B cell (primary cell): ENCODE measurements at regions of chr5 and their contacts with region 1.

Region 1: DNA sequence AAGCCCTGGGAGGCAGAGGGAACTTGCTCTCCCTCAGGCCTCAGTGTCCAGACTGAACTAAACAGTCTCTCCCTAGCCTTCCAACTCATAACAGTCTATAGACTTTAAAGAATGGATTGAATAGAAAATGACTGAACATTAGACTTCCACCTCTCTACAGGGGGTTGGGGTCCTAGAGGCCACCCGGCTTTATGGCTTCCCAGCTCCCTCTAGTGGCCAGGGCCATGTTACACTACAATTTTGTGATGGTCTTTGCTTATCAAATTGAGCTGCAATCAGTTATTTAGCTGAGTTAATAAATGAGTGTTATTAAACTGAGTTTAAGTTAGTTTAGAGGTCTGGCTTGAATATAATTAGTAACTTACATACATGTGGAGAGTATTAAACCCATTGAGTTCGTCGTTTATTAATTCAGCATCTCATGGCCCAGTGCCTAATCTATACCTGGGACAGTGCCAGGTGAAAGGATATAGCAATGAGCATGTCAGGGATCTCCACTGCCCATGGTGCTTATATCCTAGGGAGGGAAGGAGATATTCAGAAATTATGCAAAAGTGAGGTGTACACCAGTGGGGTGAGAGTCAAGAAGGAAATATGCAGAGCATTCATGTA is 105.2 kb downstream of the SH3TC2 start:
- DNase-seq: peak; percentile 68
- ATAC-seq: peak; percentile 69
- H3K4me3 ChIP-seq: no peak overlapping the region
- H3K4me3 Mint-ChIP-seq: no peak overlapping the region
- H3K27ac ChIP-seq: no peak overlapping the region
- H3K27ac Mint-ChIP-seq: no peak overlapping the region
- H3K4me1 ChIP-seq: peaks cover 4 to 5% of the 10 kb centered on the region in 2 donors
- H3K4me1 Mint-ChIP-seq: peaks cover 3% of the 10 kb centered on the region
- H3K27me3 ChIP-seq: no peaks in the 10 kb centered on the region
- H3K27me3 Mint-ChIP-seq: no peaks in the 10 kb centered on the region
- CTCF ChIP-seq: peak; percentile 97

Region 2: GRCh38 chr5:148374692-148375360 is 582.9 kb before region 1 on chr5:
- CTCF ChIA-PET with region 1: no interaction called
- POLR2A ChIA-PET with region 1: no interaction called
- intact Hi-C with region 1: no loop called
- DNase-seq: no peak
- ATAC-seq: peak; percentile 28
- H3K4me3 ChIP-seq: no peak overlapping the region
- H3K4me3 Mint-ChIP-seq: no peak overlapping the region
- H3K27ac ChIP-seq: no peak overlapping the region
- H3K27ac Mint-ChIP-seq: no peak overlapping the region
- H3K4me1 ChIP-seq: no peaks in the 10 kb centered on the region
- H3K4me1 Mint-ChIP-seq: no peaks in the 10 kb centered on the region
- H3K27me3 ChIP-seq: no peaks in the 10 kb centered on the region
- H3K27me3 Mint-ChIP-seq: no peaks in the 10 kb centered on the region
- CTCF ChIP-seq: no peak

Region 3: DNA sequence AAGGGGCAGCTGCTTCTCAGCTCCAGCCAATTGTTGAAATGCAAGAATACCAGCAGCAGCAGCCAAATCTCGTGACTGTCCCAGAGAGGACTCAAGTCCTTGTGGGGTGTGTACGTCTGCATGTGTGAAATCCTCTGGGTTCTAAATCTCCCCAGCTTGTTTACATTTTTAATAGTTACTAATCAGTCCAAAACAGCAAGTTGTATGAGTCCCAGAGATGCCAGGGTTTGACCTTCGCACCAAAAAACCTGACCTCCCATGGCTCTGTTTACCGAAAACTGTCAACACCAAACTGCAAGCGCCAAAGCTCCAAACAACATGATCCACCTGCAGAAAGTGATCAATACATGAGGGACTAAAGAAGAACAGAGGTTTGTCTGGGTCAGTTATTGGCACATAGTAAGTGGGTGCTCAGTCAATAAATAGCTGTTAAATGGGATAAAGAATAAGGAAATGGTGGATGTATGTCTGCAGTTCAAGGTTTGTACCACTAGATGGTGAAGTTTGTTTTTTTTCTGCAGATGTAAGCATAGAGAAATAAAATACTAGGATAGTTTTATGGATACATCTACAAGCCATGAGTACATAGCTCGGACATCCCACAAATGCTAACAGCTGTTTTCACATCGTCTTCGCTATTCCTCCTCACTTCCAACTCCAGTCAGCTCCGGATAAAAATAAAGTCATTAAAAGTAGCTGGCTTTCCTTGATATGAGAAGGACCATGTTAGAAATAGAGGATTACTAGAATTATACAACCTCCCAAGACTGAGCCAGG is 216.5 kb before region 1 on chr5:
- CTCF ChIA-PET with region 1: interaction called, 753 read pairs
- POLR2A ChIA-PET with region 1: no interaction called
- intact Hi-C with region 1: loop called (anchors 1 kb)
- DNase-seq: peak; percentile 72
- ATAC-seq: peak; percentile 28
- H3K4me3 ChIP-seq: no peak overlapping the region
- H3K4me3 Mint-ChIP-seq: no peak overlapping the region
- H3K27ac ChIP-seq: no peak overlapping the region
- H3K27ac Mint-ChIP-seq: no peak overlapping the region
- H3K4me1 ChIP-seq: peaks cover 0 to 3% of the 10 kb centered on the region in 2 donors
- H3K4me1 Mint-ChIP-seq: peaks cover 10% of the 10 kb centered on the region
- H3K27me3 ChIP-seq: no peaks in the 10 kb centered on the region
- H3K27me3 Mint-ChIP-seq: peaks cover 4% of the 10 kb centered on the region
- CTCF ChIP-seq: peak; percentile 87

Region 4: GRCh38 chr5:148820461-148821395 is 137.0 kb before region 1 on chr5:
- CTCF ChIA-PET with region 1: interaction called, 44 read pairs
- POLR2A ChIA-PET with region 1: no interaction called
- intact Hi-C with region 1: loop called (anchors 1 kb)
- DNase-seq: peak; percentile 41
- ATAC-seq: no peak
- H3K4me3 ChIP-seq: no peak overlapping the region
- H3K4me3 Mint-ChIP-seq: no peak overlapping the region
- H3K27ac ChIP-seq: no peak overlapping the region
- H3K27ac Mint-ChIP-seq: no peak overlapping the region
- H3K4me1 ChIP-seq: peaks cover 33 to 35% of the 10 kb centered on the region in 2 donors
- H3K4me1 Mint-ChIP-seq: peaks cover 60% of the 10 kb centered on the region
- H3K27me3 ChIP-seq: no peaks in the 10 kb centered on the region
- H3K27me3 Mint-ChIP-seq: no peaks in the 10 kb centered on the region
- CTCF ChIP-seq: peak; percentile 67

Region 5: GRCh38 chr5:148831590-148832565 is 125.8 kb before region 1 on chr5:
- CTCF ChIA-PET with region 1: interaction called, 16 read pairs
- POLR2A ChIA-PET with region 1: no interaction called
- intact Hi-C with region 1: no loop called
- DNase-seq: peak; percentile 78
- ATAC-seq: peak; percentile 77
- H3K4me3 ChIP-seq: peak overlapping the region in 4 of 5 experiments; percentile 33 to 53 (median 45)
- H3K4me3 Mint-ChIP-seq: peak overlapping the region; percentile 94
- H3K27ac ChIP-seq: peak overlapping the region; percentile 77 to 78
- H3K27ac Mint-ChIP-seq: peak overlapping the region; percentile 98
- H3K4me1 ChIP-seq: peaks cover 97% of the 10 kb centered on the region in 2 donors
- H3K4me1 Mint-ChIP-seq: peaks cover 94% of the 10 kb centered on the region
- H3K27me3 ChIP-seq: no peaks in the 10 kb centered on the region
- H3K27me3 Mint-ChIP-seq: no peaks in the 10 kb centered on the region
- CTCF ChIP-seq: no peak

Region 6: DNA sequence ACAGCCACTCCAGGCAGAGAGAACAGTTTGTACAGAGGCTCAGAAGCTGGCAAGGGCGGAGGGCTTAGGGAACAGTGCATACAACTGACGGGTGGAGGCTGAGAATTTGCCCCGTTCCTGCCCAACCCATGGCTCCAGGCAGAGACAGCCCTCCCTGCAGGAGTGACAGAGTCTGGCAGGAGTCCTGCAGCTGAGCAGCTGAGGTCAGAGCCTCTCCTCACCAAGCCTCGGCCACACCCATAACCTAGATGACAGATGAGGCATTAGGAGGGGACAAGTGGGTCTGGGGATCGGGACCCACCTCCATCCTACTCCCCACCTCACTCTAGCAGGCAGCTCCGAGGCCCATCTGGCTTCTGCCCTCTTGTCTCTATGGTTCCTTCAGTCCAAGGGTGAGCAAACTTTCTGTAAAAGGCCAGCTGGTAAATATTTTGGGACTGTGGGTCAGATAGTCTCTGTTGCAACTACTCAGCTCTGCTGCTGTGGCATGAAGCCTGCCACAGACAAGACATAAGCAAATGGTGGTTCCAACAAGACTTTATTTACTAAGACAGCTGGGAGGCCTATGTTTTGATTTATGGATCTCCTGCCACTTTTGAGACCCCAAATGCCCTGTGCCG is 21.5 kb after region 1 on chr5:
- CTCF ChIA-PET with region 1: interaction called, 17 read pairs
- POLR2A ChIA-PET with region 1: interaction called, 13 read pairs
- intact Hi-C with region 1: no loop called
- DNase-seq: no peak
- ATAC-seq: no peak
- H3K4me3 ChIP-seq: no peak overlapping the region
- H3K4me3 Mint-ChIP-seq: no peak overlapping the region
- H3K27ac ChIP-seq: no peak overlapping the region
- H3K27ac Mint-ChIP-seq: no peak overlapping the region
- H3K4me1 ChIP-seq: no peaks in the 10 kb centered on the region
- H3K4me1 Mint-ChIP-seq: no peaks in the 10 kb centered on the region
- H3K27me3 ChIP-seq: peaks cover 0 to 5% (median 0%) of the 10 kb centered on the region in 4 experiments
- H3K27me3 Mint-ChIP-seq: peaks cover 29% of the 10 kb centered on the region
- CTCF ChIP-seq: no peak

Region 7: DNA sequence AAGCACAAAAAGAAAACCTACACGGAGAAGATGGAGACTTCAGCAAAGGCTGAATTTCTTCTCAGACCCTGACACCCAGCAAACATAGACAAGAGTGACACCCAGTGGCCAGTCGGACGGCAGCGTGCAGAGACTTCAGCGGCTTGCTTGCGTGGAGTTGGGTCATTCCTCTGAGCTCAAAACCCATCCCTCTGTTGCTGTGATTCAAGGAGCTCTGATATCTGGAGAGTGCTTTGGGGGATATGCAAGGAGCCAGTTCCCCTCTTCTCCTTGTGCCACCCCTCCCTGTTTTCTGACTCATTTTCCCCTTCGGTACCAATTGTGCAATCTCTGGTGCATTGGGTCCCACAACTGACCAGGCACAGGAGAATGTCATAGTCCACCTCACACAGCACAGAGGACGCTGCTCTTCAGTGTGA is 77.7 kb after region 1 on chr5:
- CTCF ChIA-PET with region 1: interaction called, 35 read pairs
- POLR2A ChIA-PET with region 1: no interaction called
- intact Hi-C with region 1: loop called (anchors 5 kb)
- DNase-seq: peak; percentile 69
- ATAC-seq: peak; percentile 54
- H3K4me3 ChIP-seq: no peak overlapping the region
- H3K4me3 Mint-ChIP-seq: no peak overlapping the region
- H3K27ac ChIP-seq: no peak overlapping the region
- H3K27ac Mint-ChIP-seq: no peak overlapping the region
- H3K4me1 ChIP-seq: no peaks in the 10 kb centered on the region
- H3K4me1 Mint-ChIP-seq: no peaks in the 10 kb centered on the region
- H3K27me3 ChIP-seq: no peaks in the 10 kb centered on the region
- H3K27me3 Mint-ChIP-seq: peaks cover 18% of the 10 kb centered on the region
- CTCF ChIP-seq: peak; percentile 83